ENCODE measurements at regions of chr4 and their contacts with region 1.

Region 1: DNA sequence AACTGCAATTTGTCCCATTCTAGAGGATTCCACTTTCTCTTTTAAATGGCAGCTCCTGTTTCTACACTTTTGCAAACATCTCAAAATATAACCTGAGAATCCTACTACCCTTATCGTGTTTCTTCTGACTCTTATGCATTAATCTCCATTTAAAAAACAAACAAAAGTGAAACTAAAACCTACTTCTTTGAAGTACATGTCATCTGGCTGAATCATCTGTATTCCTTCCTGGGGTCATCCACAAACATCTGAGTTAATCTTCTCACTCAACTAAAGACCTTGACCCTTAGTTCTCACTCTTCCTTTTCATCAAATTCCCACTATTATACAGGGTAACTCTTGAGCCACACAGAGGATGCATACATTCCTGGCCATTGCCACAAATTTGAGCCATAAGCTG is 584.8 kb downstream of the PPARGC1A start:
- DNase-seq: no peak
- ATAC-seq: peak; percentile 80
- H3K4me3 ChIP-seq: 0 out of 2 replicates have a peak overlapping the region, but pooled peaks have one; percentile 32
- H3K27ac ChIP-seq: no peak overlapping the region
- H3K4me1 ChIP-seq: no peaks in the 10 kb centered on the region
- H3K27me3 ChIP-seq: no peaks in the 10 kb centered on the region
- CTCF ChIP-seq: no peak
- EP300 ChIP-seq: no peak
- POLR2A ChIP-seq: no peak
- RAD21 ChIP-seq: no peak

Region 2: DNA sequence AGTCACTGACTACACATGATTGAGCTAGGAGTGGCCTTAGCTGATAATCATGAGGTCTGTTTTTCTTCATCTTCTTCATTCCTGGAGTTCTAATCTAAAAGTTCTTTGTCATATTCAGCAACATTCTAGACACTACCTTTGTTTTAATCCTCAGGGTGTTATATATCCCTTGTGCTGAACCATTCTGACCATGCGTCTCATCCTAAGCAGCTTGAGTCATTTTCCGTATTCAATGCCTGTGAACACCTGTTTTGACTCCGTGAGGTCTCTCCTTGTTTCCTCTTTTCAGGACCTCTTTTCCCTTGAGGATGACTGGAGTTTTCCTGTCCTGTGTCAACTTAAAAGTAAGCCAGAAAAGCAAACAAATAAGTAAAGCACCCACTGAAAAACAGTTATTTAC is 14.4 kb before region 1 on chr4:
- CTCF ChIA-PET with region 1: interaction called, 5 read pairs
- POLR2A ChIA-PET with region 1: interaction called, 7 read pairs
- RAD21 ChIA-PET with region 1: no interaction called
- SMC1A ChIA-PET with region 1: interaction called, 27 read pairs
- in situ Hi-C with region 1: no loop called
- intact Hi-C with region 1: no loop called
- DNase-seq: no peak
- ATAC-seq: peak; percentile 55
- H3K4me3 ChIP-seq: no peak overlapping the region
- H3K27ac ChIP-seq: no peak overlapping the region
- H3K4me1 ChIP-seq: no peaks in the 10 kb centered on the region
- H3K27me3 ChIP-seq: no peaks in the 10 kb centered on the region
- CTCF ChIP-seq: no peak
- EP300 ChIP-seq: no peak
- POLR2A ChIP-seq: no peak
- RAD21 ChIP-seq: no peak

Region 3: DNA sequence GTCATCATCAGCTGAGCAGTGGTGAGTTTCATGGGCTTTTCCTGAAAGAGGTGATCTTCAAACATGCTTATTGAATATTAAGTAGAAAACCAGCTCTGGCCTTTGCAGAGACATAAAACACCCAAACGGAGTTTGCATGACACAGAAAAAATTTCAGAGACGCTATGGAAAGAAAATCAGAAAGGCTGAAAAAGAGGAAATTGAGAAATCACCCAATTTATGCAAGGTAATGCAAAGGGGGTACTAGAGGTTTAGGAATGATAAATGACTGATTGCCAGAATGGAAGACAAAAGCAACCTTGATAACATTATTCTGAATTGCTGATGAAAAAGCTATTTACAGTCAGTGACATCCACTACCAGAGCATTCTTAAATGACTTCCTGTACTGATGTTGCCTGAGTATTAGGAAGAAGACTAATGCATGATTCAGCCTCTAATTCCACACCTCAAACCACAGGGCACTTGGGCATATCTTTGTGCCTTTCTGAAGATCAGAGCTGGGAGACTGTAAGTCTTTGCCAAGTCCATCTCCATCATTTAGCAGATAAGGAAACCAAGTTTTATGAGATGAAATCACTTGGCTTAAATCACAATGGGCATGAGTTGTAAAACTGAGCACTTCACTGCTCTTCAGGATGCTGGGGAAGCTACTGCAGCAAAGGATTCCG is 19.1 kb after region 1 on chr4:
- CTCF ChIA-PET with region 1: interaction called, 3 read pairs
- POLR2A ChIA-PET with region 1: no interaction called
- RAD21 ChIA-PET with region 1: no interaction called
- SMC1A ChIA-PET with region 1: interaction called, 44 read pairs
- in situ Hi-C with region 1: no loop called
- intact Hi-C with region 1: no loop called
- DNase-seq: no peak
- ATAC-seq: peak; percentile 47
- H3K4me3 ChIP-seq: no peak overlapping the region
- H3K27ac ChIP-seq: no peak overlapping the region
- H3K4me1 ChIP-seq: no peaks in the 10 kb centered on the region
- H3K27me3 ChIP-seq: no peaks in the 10 kb centered on the region
- CTCF ChIP-seq: no peak
- EP300 ChIP-seq: no peak
- POLR2A ChIP-seq: no peak
- RAD21 ChIP-seq: no peak

Region 4: GRCh38 chr4:23333946-23334878 is 29.2 kb after region 1 on chr4:
- CTCF ChIA-PET with region 1: interaction called, 6 read pairs
- POLR2A ChIA-PET with region 1: no interaction called
- RAD21 ChIA-PET with region 1: interaction called, 4 read pairs
- SMC1A ChIA-PET with region 1: interaction called, 15 read pairs
- in situ Hi-C with region 1: no loop called
- intact Hi-C with region 1: no loop called
- DNase-seq: peak; percentile 39
- ATAC-seq: peak; percentile 91
- H3K4me3 ChIP-seq: no peak overlapping the region
- H3K27ac ChIP-seq: peak overlapping the region; percentile 22; the same call in 1 of the 2 replicates
- H3K4me1 ChIP-seq: no peaks in the 10 kb centered on the region
- H3K27me3 ChIP-seq: no peaks in the 10 kb centered on the region
- CTCF ChIP-seq: peak in 2 of 3 experiments; percentile 15 to 42; a peak in 1 of 6 replicates
- EP300 ChIP-seq: peak; percentile 98
- POLR2A ChIP-seq: no peak
- RAD21 ChIP-seq: peak; percentile 64

Region 5: GRCh38 chr4:23392860-23393458 is 87.9 kb after region 1 on chr4:
- CTCF ChIA-PET with region 1: no interaction called
- POLR2A ChIA-PET with region 1: no interaction called
- RAD21 ChIA-PET with region 1: no interaction called
- SMC1A ChIA-PET with region 1: no interaction called
- in situ Hi-C with region 1: no loop called
- intact Hi-C with region 1: no loop called
- DNase-seq: no peak
- ATAC-seq: no peak
- H3K4me3 ChIP-seq: no peak overlapping the region
- H3K27ac ChIP-seq: no peak overlapping the region
- H3K4me1 ChIP-seq: no peaks in the 10 kb centered on the region
- H3K27me3 ChIP-seq: no peaks in the 10 kb centered on the region
- CTCF ChIP-seq: no peak
- EP300 ChIP-seq: no peak
- POLR2A ChIP-seq: no peak
- RAD21 ChIP-seq: no peak